Sigmoid colon (tissue), 7 donors: ENCODE measurements at regions of chr2 and their contacts with region 1.

Region 1: DNA sequence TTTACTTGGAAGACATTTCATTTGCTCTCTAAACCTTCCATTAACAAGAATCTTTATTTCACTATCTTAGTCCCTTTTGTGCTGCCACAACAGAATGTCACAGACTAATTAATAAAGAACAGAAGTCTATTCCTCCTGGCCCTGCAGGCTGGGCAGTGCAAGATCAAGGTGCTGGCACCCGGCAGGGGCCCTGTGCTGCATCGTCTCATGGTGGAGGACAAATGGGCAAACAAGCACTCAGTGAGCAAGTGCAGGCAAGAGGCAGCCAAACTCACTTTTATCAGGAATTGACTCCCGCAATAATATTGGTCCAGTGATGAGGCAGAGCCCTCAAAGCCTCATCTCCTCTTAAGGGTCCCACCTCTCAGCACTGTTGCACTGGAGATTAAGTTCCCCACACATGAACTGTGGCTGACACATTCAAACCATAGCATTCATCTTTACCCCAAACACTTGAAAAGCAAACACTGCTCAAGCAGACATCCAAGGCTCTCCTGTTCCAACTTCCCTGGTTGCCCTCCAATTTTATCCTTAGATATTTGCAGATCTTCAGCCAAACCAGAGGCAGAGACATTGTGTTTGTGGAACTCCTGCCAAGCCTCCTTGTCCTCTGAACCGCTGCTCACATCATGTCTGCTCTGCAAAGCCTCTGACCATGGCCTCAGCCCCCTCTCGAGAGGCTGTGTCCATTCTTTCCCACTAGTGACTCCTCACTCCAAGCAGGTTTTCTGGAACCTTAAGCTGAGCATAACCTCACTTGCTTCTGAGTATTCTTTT is 404.4 kb upstream of the SOX11 start:
- DNase-seq: peak; percentile 72
- H3K4me3 ChIP-seq: no peak overlapping the region
- H3K27ac ChIP-seq: peak overlapping the region in 3 of 4 donors; percentile 57 to 63 (median 60)
- H3K4me1 ChIP-seq: peaks cover 0 to 47% (median 28%) of the 10 kb centered on the region in 4 donors
- H3K27me3 ChIP-seq: no peaks in the 10 kb centered on the region
- CTCF ChIP-seq: no peak
- EP300 ChIP-seq: peak in 2 of 4 donors; percentile 54 to 55
- POLR2A ChIP-seq: no peak

Region 2: GRCh38 chr2:5121642-5122041 is 166.1 kb before region 1 on chr2:
- intact Hi-C with region 1: loop called (anchors 10 kb)
- DNase-seq: no peak
- H3K4me3 ChIP-seq: no peak overlapping the region
- H3K27ac ChIP-seq: no peak overlapping the region
- H3K4me1 ChIP-seq: peaks cover 0 to 28% (median 8%) of the 10 kb centered on the region in 4 donors
- H3K27me3 ChIP-seq: no peaks in the 10 kb centered on the region
- CTCF ChIP-seq: no peak
- EP300 ChIP-seq: no peak
- POLR2A ChIP-seq: no peak

Region 3: DNA sequence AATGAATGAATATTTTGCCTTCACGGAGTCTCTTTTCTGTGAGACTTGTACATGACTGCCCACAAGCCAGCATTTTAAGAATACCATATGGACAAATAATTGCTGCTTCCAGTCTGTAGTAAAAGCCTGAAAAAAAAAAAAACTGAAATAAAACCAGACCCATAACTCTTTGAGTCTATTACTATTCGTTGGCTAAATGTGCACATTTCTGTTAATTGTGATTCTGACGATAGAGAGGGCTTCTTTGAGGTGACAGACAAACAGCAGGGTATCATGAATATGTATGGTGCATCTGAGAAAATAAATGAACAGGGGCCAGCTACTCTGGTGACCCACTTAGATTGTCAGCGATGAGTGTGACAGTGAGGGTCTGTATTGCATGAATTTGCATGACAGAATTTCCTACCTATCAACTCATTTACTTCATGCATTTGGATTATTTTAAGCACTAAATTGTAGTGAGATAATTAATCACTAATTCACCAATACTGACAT is 23.4 kb before region 1 on chr2:
- intact Hi-C with region 1: no loop called
- DNase-seq: no peak
- H3K4me3 ChIP-seq: no peak overlapping the region
- H3K27ac ChIP-seq: no peak overlapping the region
- H3K4me1 ChIP-seq: no peaks in the 10 kb centered on the region
- H3K27me3 ChIP-seq: no peaks in the 10 kb centered on the region
- CTCF ChIP-seq: no peak
- EP300 ChIP-seq: no peak
- POLR2A ChIP-seq: no peak

Region 4: DNA sequence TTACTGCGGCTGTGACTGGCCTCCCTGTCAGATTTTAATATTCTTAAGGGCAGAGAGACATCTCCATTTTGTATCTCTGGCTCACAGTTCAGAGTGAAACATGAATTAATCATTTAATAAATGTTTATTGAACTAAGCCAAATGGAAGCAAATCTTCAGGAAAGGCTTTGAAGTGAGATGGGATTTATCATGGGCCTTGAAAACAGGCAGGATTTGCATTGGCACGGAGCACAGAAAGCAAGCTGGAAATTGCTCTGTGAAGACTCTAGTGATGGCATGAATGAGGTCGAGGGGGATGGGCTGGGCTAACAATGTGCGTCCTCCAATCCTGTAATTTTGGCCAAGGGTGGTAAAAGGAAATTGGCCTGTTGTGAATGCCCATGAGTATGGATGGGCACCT is 34.6 kb after region 1 on chr2:
- intact Hi-C with region 1: loop called (anchors 5 kb)
- DNase-seq: peak; percentile 74
- H3K4me3 ChIP-seq: no peak overlapping the region
- H3K27ac ChIP-seq: peak overlapping the region in 3 of 4 donors; percentile 37 to 40 (median 39)
- H3K4me1 ChIP-seq: peaks cover 0 to 29% (median 15%) of the 10 kb centered on the region in 4 donors
- H3K27me3 ChIP-seq: no peaks in the 10 kb centered on the region
- CTCF ChIP-seq: no peak
- EP300 ChIP-seq: peak in 1 of 4 donors; percentile 47
- POLR2A ChIP-seq: no peak

Region 5: DNA sequence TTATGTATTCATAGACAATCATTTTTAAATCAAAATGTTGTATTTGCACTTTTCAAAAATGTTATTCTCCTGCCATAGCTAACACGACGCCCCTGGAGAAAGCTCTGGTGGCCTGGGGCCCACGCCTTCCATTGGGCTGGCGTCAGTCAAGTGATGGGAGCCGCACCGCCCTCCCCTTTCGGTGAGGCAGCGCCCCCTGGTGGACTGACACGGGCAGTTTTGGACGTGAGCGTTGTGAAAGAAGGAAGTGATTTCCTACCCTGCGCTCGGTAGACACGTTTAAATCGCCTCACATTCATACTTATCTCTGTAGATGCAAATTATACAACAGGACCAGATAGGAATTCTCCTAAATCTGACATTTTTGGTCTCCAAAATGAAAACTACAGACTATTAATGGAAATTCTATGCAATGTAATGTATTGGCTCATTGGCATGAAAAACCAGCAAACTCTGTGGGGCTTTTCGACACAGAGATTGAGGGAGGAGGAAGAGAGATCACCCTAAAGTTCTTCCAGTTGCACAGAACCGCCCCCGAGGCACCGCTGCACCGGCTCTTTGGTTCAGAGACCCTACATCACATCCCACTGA is 78.2 kb after region 1 on chr2:
- intact Hi-C with region 1: loop called (anchors 10 kb)
- DNase-seq: peak; percentile 79
- H3K4me3 ChIP-seq: no peak overlapping the region
- H3K27ac ChIP-seq: no peak overlapping the region
- H3K4me1 ChIP-seq: peaks cover 0 to 10% (median 0%) of the 10 kb centered on the region in 4 donors
- H3K27me3 ChIP-seq: no peaks in the 10 kb centered on the region
- CTCF ChIP-seq: peak; percentile 51 to 82 (median 63)
- EP300 ChIP-seq: no peak
- POLR2A ChIP-seq: no peak

Region 6: DNA sequence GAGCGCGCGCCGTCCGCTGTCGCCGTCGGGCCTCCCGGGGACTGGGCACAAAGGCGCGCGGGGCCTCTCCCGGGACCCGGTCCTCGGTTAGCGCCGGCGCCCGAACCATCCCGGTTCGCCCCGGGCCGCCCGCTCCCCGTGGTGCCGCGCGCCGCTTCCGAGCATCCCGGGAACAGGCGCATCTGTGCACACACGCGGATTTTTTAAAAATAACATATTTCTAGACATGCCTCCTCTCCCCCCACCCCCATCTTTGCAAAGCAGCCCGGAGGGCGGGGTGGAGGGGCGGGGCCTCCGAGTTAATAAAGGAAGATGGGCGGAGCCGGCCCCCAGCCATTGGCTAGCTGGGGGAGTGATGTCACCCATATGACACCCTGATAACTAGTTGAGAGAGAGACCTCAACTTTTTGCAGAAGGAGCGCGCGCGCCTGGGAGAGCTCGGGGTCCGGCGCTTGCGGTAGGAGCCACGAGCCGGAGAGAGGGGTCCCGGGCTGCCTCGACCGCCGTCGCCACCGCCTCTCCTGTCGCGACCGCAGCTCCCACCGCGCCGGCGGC is 404.3 kb after region 1 on chr2 and contains the start of gene SOX11:
- intact Hi-C with region 1: loop called (anchors 10 kb)
- DNase-seq: peak; percentile 91
- H3K4me3 ChIP-seq: peak within 1 kb of the TSS; percentile 27 to 52 (median 48)
- H3K27ac ChIP-seq: peak within 1 kb of the TSS; percentile 20 to 84 (median 78)
- H3K4me1 ChIP-seq: peaks cover 0 to 51% (median 35%) of the 10 kb centered on the region in 4 donors
- H3K27me3 ChIP-seq: peaks cover 28 to 82% (median 51%) of the 10 kb centered on the region in 3 donors
- CTCF ChIP-seq: no peak
- EP300 ChIP-seq: no peak
- POLR2A ChIP-seq: no peak
- total RNA-seq, gene SOX11: 2.6 to 3.6 (median 2.9) TPM